Activated CD4-positive, alpha-beta memory T cell treated with anti-CD3 and anti-CD28 coated beads, Interleukin-2, amount 10 ng/mL, durations not matched to agents 7 days and 5 days (primary cell): ENCODE measurements at regions of chr5 and their contacts with region 1.

Region 1: GRCh38 chr5:148730943-148731861 is 76.9 kb upstream of the HTR4 start:
- DNase-seq: peak; percentile 76
- H3K4me3 Mint-ChIP-seq: peak overlapping the region; percentile 78
- H3K27ac Mint-ChIP-seq: peak overlapping the region; percentile 77
- H3K4me1 Mint-ChIP-seq: peaks cover 19% of the 10 kb centered on the region
- H3K27me3 Mint-ChIP-seq: peaks cover 12% of the 10 kb centered on the region

Region 2: DNA sequence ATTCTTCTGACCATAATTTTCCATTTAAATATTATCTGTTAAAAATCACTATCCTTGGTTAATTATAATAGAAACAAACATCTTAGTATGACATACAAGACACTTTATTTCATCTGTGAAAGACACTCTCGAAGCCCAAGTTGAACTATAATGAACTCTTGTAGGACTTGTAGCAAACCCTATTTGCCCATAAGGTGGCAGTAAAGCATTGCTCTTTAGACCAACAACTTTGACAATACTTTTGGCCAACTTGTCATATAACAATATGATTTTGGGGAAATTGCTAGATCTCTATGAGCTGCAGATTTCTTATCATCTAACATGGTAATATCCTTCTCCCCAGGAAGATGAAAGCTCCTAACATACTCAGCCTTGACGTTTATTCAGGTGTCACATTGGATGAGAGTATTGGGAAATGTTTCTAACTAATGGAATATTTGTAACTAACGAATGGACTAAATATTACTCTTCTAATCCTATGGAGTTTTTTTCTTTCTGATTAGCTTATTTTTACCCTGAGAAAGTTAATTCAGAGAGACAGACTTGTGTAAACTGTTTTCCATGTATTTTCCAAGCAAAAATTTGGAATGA is 551.9 kb before region 1 on chr5:
- CTCF ChIA-PET with region 1: interaction called, 22 read pairs
- POLR2A ChIA-PET with region 1: no interaction called
- DNase-seq: no peak
- H3K4me3 Mint-ChIP-seq: no peak overlapping the region
- H3K27ac Mint-ChIP-seq: no peak overlapping the region
- H3K4me1 Mint-ChIP-seq: no peaks in the 10 kb centered on the region
- H3K27me3 Mint-ChIP-seq: peaks cover 10% of the 10 kb centered on the region

Region 3: GRCh38 chr5:148482691-148483462 is 248.3 kb before region 1 on chr5:
- CTCF ChIA-PET with region 1: interaction called, 12 read pairs
- POLR2A ChIA-PET with region 1: no interaction called
- DNase-seq: peak; percentile 62
- H3K4me3 Mint-ChIP-seq: no peak overlapping the region
- H3K27ac Mint-ChIP-seq: no peak overlapping the region
- H3K4me1 Mint-ChIP-seq: peaks cover 2% of the 10 kb centered on the region
- H3K27me3 Mint-ChIP-seq: peaks cover 29% of the 10 kb centered on the region

Region 4: DNA sequence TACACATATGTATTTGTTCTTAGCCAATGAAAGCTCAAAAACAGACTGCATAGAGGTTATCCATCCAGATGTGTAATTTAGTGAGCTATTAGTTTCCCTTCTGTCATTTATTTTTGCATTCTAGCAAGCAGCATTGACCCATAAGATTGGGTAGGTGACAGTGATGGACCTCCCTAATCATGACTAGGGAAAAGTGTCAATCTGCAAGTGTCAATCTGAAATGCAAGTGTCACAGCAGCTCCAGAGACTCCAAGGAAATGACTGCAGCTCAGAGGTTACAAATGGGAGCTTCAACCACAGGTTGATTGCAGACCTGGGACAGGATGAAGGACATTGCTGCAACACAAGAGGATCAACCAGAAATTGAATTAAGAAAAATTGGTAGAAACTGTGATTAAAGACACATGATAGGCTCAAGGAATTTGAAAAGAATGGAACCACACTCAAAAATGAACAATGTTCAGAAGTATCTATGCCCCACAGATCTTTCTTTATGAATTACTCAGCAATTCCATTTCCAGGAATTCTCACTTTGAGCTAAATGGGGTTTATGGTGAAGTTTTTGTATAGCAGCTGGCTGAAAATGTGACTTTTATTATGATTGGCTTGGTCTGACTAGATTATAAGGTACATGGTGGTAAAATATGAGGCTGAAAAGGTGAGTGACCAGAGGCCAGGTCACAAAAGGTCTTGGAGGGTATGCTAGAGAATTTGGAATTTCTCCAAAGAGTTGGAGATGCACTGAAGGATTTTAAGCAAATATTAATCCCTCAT is 17.3 kb before region 1 on chr5:
- CTCF ChIA-PET with region 1: interaction called, 10 read pairs
- POLR2A ChIA-PET with region 1: no interaction called
- DNase-seq: no peak
- H3K4me3 Mint-ChIP-seq: no peak overlapping the region
- H3K27ac Mint-ChIP-seq: no peak overlapping the region
- H3K4me1 Mint-ChIP-seq: peaks cover 13% of the 10 kb centered on the region
- H3K27me3 Mint-ChIP-seq: peaks cover under 1% of the 10 kb centered on the region

Region 5: GRCh38 chr5:148957591-148958202 is 226.5 kb after region 1 on chr5:
- CTCF ChIA-PET with region 1: interaction called, 69 read pairs
- POLR2A ChIA-PET with region 1: interaction called, 3 read pairs
- DNase-seq: peak; percentile 58
- H3K4me3 Mint-ChIP-seq: no peak overlapping the region
- H3K27ac Mint-ChIP-seq: no peak overlapping the region
- H3K4me1 Mint-ChIP-seq: no peaks in the 10 kb centered on the region
- H3K27me3 Mint-ChIP-seq: no peaks in the 10 kb centered on the region

Region 6: GRCh38 chr5:149035372-149035790 is 304.2 kb after region 1 on chr5:
- CTCF ChIA-PET with region 1: interaction called, 241 read pairs
- POLR2A ChIA-PET with region 1: no interaction called
- DNase-seq: peak; percentile 79
- H3K4me3 Mint-ChIP-seq: no peak overlapping the region
- H3K27ac Mint-ChIP-seq: no peak overlapping the region
- H3K4me1 Mint-ChIP-seq: peaks cover 42% of the 10 kb centered on the region
- H3K27me3 Mint-ChIP-seq: no peaks in the 10 kb centered on the region

Region 7: GRCh38 chr5:149125386-149125891 is 394.2 kb after region 1 on chr5:
- CTCF ChIA-PET with region 1: no interaction called
- POLR2A ChIA-PET with region 1: no interaction called
- DNase-seq: no peak
- H3K4me3 Mint-ChIP-seq: no peak overlapping the region
- H3K27ac Mint-ChIP-seq: no peak overlapping the region
- H3K4me1 Mint-ChIP-seq: no peaks in the 10 kb centered on the region
- H3K27me3 Mint-ChIP-seq: peaks cover 19% of the 10 kb centered on the region

Region 8: GRCh38 chr5:149162401-149163084 is 431.3 kb after region 1 on chr5:
- CTCF ChIA-PET with region 1: no interaction called
- POLR2A ChIA-PET with region 1: no interaction called
- DNase-seq: no peak
- H3K4me3 Mint-ChIP-seq: no peak overlapping the region
- H3K27ac Mint-ChIP-seq: no peak overlapping the region
- H3K4me1 Mint-ChIP-seq: no peaks in the 10 kb centered on the region
- H3K27me3 Mint-ChIP-seq: peaks cover 7% of the 10 kb centered on the region